WTC11 (cell line): ENCODE measurements at regions of chr12 and their contacts with region 1.

Region 1: DNA sequence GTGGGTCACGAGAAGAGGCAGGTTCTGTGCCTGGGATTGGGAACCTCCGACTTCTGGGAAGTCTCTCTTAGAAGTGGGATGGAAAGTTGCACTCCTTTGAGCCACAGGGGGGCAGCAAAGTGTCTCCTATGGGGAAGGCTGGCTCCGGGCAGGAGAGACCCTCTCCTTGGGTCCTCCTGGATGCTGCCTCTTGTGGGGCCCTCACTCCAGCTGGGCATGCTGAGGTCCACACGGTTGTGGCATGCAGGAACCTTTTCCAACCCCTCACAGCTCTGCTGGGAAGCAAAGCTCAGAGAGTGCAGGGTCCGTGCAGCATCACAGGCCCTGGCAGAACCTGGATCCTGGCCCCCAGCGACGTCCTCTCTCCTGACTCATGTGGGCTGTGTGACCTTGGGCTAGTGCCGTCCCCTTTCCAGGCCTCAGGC is 17.4 kb downstream of the SDSL start:
- DNase-seq: peak; percentile 85
- ATAC-seq: peak; percentile 94
- H3K4me3 Mint-ChIP-seq: no peak overlapping the region
- H3K27ac Mint-ChIP-seq: no peak overlapping the region
- H3K4me1 Mint-ChIP-seq: peaks cover 3% of the 10 kb centered on the region; the same call in 1 of the 2 replicates
- H3K27me3 Mint-ChIP-seq: no peaks in the 10 kb centered on the region
- CTCF ChIP-seq: peak; percentile 68

Region 2: GRCh38 chr12:113456761-113457160 is 17.1 kb after region 1 on chr12:
- CTCF ChIA-PET with region 1: interaction called, 24 read pairs
- POLR2A ChIA-PET with region 1: no interaction called
- DNase-seq: no peak
- ATAC-seq: no peak
- H3K4me3 Mint-ChIP-seq: no peak overlapping the region
- H3K27ac Mint-ChIP-seq: no peak overlapping the region
- H3K4me1 Mint-ChIP-seq: peaks cover 18% of the 10 kb centered on the region
- H3K27me3 Mint-ChIP-seq: peaks cover 24% of the 10 kb centered on the region
- CTCF ChIP-seq: no peak